ENCODE measurements at regions of chr1 and their contacts with region 1.

Region 1: DNA sequence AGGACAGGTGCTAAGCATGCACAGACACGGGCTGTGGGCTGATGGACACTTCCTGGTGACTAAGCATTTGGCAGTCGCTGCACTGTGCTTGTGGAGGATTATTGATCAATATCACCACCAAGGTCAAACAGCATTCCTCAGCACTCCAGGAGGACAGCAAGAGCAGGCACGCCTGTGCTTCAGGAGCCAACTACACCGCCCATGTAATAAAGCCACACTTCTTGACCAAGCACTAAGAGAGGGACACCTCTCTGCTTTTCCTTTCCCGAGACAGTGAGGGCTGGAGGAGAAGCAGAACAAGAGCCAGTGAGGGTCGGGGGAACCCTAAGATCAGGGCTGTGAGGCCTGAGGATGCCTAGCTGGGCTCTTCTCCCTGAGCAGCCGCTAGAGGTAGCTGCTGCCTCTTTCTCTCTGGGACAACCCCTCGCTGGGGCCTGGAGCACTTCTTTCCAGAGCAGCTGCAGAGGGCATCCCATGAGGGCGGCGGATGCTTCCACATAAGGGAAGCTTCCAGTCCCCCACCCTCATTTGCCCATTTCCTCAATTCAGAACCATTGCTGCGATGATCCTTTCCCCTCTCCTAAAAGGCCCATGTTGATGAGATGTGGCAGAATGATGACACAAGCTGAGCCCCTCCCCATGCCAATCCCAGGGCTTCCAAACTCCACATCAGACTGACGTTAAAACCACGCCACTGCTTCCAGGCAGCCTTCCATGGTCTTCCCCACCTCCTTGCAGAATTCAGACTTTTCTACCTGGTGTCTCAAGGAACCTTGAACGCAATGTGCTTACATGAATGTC is 19.1 kb downstream of the RAB7B start:
- DNase-seq: peak; percentile 45
- ATAC-seq: no peak
- H3K4me3 Mint-ChIP-seq: no peak overlapping the region
- H3K27ac Mint-ChIP-seq: no peak overlapping the region
- H3K4me1 Mint-ChIP-seq: no peaks in the 10 kb centered on the region
- H3K27me3 Mint-ChIP-seq: no peaks in the 10 kb centered on the region

Region 2: GRCh38 chr1:206106328-206107167 is 122.4 kb after region 1 on chr1:
- CTCF ChIA-PET with region 1: interaction called, 35 read pairs
- DNase-seq: peak; percentile 81
- ATAC-seq: peak; percentile 92
- H3K4me3 Mint-ChIP-seq: no peak overlapping the region
- H3K27ac Mint-ChIP-seq: no peak overlapping the region
- H3K4me1 Mint-ChIP-seq: no peaks in the 10 kb centered on the region
- H3K27me3 Mint-ChIP-seq: peaks cover 17% of the 10 kb centered on the region

Measured in activated CD8-positive, alpha-beta memory T cell treated with anti-CD3 and anti-CD28 coated beads, Interleukin-2, amount 10 ng/mL, durations not matched to agents 7 days and 5 days (primary cell).